Naive thymus-derived CD8-positive, alpha-beta T cell (primary cell): ENCODE measurements at regions of chr3 and their contacts with region 1.

Region 1: GRCh38 chr3:196179380-196180308 is 31.6 kb downstream of the ZDHHC19 start:
- DNase-seq: peak; percentile 77 to 95 (median 90)
- ATAC-seq: peak; percentile 93
- H3K4me3 Mint-ChIP-seq: peak overlapping the region; percentile 62 to 85 (median 76)
- H3K27ac Mint-ChIP-seq: peak overlapping the region; percentile 86 to 99 (median 96)
- H3K4me1 Mint-ChIP-seq: peaks cover 13 to 45% (median 31%) of the 10 kb centered on the region in 4 donors
- H3K27me3 Mint-ChIP-seq: no peaks in the 10 kb centered on the region

Region 2: DNA sequence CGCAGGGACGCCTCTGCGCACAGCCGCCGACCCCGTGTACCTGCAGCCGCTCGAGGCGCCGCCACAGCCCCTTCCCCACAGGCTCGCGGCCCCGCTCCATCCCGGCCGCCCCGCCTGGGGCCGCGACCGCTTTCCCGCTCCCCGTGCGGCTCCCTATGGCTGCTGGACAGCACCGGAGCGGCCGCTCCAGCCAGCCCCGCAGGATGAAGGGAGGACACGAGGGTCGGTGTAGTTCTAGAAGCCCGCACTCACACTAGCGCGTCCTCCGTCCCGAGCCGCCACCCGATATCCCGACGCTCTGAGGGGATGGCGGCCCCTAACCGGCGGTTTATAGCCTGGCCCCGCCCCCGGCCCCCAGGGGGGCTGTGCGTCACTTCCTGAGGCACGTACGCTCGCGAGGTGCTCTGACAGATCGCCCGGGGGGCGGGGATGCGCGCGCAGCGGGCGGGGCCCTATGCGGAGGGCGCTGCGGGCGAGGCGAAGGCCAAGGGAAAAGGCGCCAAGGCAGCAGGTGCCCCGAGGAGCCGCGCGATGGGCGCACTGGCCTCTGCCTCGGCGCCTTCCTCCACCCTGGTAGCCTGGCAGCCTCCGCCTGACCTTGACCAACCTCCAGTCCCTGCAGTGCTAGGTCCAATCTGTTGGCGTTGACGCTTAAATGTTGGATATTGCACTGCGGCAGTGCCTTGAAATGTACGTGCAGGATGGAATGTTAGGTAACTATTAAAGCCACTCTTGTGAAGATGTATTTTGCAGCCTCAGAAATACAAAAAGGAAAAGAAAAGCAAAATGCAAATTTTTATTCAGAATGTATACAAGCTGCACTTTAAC is 97.6 kb before region 1 on chr3 and contains the start of gene TFRC:
- POLR2A ChIA-PET with region 1: interaction called, 10 read pairs
- DNase-seq: peak; percentile 88 to 99 (median 95)
- ATAC-seq: peak; percentile 87 to 91
- H3K4me3 Mint-ChIP-seq: peak within 1 kb of the TSS; percentile 84 to 99 (median 94)
- H3K27ac Mint-ChIP-seq: peak within 1 kb of the TSS; percentile 92 to 99 (median 97)
- H3K4me1 Mint-ChIP-seq: peaks cover 16 to 47% (median 44%) of the 10 kb centered on the region in 4 donors
- H3K27me3 Mint-ChIP-seq: no peaks in the 10 kb centered on the region
- polyA plus RNA-seq, gene TFRC: 7.1 to 14.5 (median 10.0) TPM

Region 3: GRCh38 chr3:196192036-196192523 is 12.4 kb after region 1 on chr3:
- POLR2A ChIA-PET with region 1: interaction called, 22 read pairs
- DNase-seq: peak in 4 of 10 donors; percentile 14 to 35 (median 26)
- ATAC-seq: peak; percentile 49 to 64
- H3K4me3 Mint-ChIP-seq: peak overlapping the region in 7 of 10 donors; percentile 18 to 64 (median 56)
- H3K27ac Mint-ChIP-seq: peak overlapping the region; percentile 52 to 98 (median 90)
- H3K4me1 Mint-ChIP-seq: peaks cover 7 to 29% (median 14%) of the 10 kb centered on the region in 4 donors
- H3K27me3 Mint-ChIP-seq: no peaks in the 10 kb centered on the region